Gastrocnemius medialis (tissue), 4 donors: ENCODE measurements at regions of chr6 and their contacts with region 1.

Region 1: GRCh38 chr6:47413752-47414422 is 63.7 kb upstream of the CD2AP start:
- DNase-seq: no peak
- ATAC-seq: peak; percentile 80 to 92
- H3K4me3 ChIP-seq: peak overlapping the region; percentile 36 to 57 (median 54)
- H3K27ac ChIP-seq: peak overlapping the region in 1 of 4 donors; percentile 52
- H3K4me1 ChIP-seq: peaks cover 0 to 5% of the 10 kb centered on the region in 2 donors
- H3K27me3 ChIP-seq: no peaks in the 10 kb centered on the region
- CTCF ChIP-seq: peak; percentile 60 to 91 (median 76)
- POLR2A ChIP-seq: no peak

Region 2: DNA sequence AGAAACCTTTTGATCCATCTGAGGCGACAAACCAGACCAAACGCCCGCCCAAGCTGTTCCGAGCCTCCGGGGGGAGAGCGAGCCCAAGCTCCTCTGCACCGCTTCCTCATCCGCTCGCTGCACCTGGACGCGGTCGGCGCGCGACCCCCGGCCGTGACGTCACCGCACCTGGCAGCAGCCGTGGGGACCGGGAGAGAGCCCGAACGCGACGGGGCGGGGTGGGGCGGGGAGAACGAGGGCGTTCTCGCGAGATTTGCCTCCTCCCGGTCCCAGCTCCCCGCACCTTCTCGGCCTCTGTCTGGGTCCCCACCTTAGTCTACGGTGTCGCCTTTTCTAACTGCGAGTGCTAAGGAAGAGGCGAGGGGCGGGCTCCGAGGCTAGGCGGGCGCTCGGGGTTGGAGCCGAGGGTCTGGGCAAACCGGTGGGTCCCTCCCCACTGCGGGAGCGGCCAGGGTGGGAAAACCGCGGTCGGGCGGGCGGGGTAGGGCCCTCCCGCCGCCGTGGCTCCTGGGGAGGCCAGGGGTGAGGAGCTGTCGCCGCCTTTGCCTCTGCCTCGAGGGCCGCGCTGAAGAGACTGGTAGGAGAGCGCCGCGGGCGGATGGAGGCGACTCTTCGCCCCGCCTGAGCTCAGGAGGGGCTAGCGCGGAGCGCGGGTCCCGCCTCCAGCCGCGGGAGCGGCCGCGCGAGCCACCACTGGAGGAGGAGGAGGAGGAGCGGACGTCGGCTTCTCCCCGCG is 63.8 kb after region 1 on chr6 and contains the start of gene CD2AP:
- in situ Hi-C with region 1: no loop called
- intact Hi-C with region 1: loop called (anchors 2 kb)
- DNase-seq: peak; percentile 74 to 75
- ATAC-seq: peak; percentile 93 to 94
- H3K4me3 ChIP-seq: peak within 1 kb of the TSS; percentile 77 to 93 (median 84)
- H3K27ac ChIP-seq: peak within 1 kb of the TSS; percentile 89 to 96 (median 94)
- H3K4me1 ChIP-seq: peaks cover 19 to 29% of the 10 kb centered on the region in 2 donors
- H3K27me3 ChIP-seq: no peaks in the 10 kb centered on the region
- CTCF ChIP-seq: peak in 1 of 5 experiments; percentile 33
- POLR2A ChIP-seq: peak; percentile 42 to 66
- total RNA-seq, gene CD2AP: 6.9 to 14.1 (median 8.6) TPM

Region 3: DNA sequence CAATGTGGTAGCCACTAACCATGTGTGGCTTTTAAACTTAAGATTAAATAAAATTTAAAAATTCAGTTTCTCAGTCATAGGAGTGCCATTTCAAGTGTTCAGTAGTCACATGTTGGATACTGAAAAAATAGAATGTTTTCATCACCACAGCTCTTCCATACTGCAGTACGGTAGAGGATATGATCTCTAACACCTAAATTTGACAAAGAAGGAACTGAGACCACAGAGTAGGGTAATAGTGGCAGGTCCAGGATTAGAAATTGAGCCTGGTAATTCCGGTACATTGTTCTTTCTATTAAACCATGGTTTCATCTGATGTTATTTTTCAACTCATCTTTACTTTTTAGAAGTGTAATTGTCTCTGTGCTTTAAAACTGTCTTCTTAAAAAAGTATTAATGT is 167.7 kb after region 1 on chr6:
- in situ Hi-C with region 1: loop called in 1 of 4 experiments (anchors 25 kb)
- intact Hi-C with region 1: no loop called
- DNase-seq: no peak
- ATAC-seq: no peak
- H3K4me3 ChIP-seq: no peak overlapping the region
- H3K27ac ChIP-seq: no peak overlapping the region
- H3K4me1 ChIP-seq: no peaks in the 10 kb centered on the region
- H3K27me3 ChIP-seq: no peaks in the 10 kb centered on the region
- CTCF ChIP-seq: no peak
- POLR2A ChIP-seq: no peak

Region 4: DNA sequence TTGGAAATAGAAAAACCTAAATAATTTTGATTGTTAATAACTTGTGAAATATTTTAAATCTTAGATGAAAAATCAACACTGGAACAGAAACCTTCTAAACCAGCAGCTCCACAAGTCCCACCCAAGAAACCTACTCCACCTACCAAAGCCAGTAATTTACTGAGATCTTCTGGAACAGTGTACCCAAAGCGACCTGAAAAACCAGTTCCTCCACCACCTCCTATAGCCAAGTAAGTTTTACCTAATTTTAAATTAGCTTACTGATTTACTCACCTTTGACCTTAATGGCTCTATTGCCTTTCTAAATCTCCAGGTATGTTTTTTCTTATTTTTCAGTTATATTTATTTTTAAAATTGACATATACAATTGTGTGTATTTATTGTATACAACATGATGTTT is 181.9 kb after region 1 on chr6:
- in situ Hi-C with region 1: loop called in 1 of 4 experiments (anchors 25 kb)
- intact Hi-C with region 1: loop called (anchors 10 kb)
- DNase-seq: no peak
- ATAC-seq: no peak
- H3K4me3 ChIP-seq: no peak overlapping the region
- H3K27ac ChIP-seq: no peak overlapping the region
- H3K4me1 ChIP-seq: no peaks in the 10 kb centered on the region
- H3K27me3 ChIP-seq: no peaks in the 10 kb centered on the region
- CTCF ChIP-seq: no peak
- POLR2A ChIP-seq: no peak

Region 5: GRCh38 chr6:47769982-47770381 is 356.1 kb after region 1 on chr6:
- in situ Hi-C with region 1: loop called (anchors 10 to 25 kb)
- intact Hi-C with region 1: no loop called
- DNase-seq: no peak
- ATAC-seq: no peak
- H3K4me3 ChIP-seq: no peak overlapping the region
- H3K27ac ChIP-seq: no peak overlapping the region
- H3K4me1 ChIP-seq: no peaks in the 10 kb centered on the region
- H3K27me3 ChIP-seq: no peaks in the 10 kb centered on the region
- CTCF ChIP-seq: no peak
- POLR2A ChIP-seq: no peak

Region 6: DNA sequence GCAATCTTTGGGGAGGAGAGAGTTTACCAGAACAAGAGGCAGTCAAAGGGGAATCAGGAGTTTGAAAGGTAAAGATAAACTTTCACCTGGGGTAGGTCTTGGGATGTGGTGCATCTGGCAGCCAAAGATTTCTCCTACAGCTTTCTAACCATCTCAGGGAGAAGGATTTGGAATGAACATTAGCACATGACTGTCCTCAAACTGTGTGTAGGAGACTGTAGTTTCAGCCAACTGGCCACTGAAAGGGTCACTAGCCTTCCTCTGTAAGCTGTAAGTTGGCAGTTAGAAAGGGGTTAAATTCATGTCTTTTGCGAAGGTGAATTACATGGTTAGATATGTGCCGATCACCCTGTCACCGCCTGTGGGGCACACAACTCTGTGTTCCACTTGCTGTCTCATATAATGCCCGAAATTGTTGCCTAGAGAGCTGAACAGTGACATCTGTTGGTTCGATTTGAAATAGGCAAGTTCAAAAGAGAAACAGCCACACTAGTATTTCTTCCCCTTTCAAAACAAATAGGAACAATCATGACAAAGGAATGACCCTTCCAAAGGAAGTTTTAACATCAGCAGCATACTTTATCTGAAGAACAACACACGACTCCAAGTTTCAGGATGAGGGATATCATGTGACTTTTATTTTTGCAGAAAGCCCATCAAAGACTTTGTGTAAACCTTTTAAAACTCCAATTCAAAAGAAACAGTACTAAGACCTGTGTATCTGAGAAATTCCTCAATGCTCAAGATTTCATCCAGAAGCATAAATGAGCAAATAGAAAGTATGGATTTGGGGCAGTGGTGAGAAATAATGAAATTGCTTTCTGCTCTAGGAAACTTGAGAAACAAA is 366.8 kb after region 1 on chr6:
- in situ Hi-C with region 1: loop called (anchors 10 to 25 kb)
- intact Hi-C with region 1: loop called (anchors 2 kb)
- DNase-seq: no peak
- ATAC-seq: peak; percentile 92 to 94
- H3K4me3 ChIP-seq: peak overlapping the region in 1 of 4 donors; percentile 30
- H3K27ac ChIP-seq: no peak overlapping the region
- H3K4me1 ChIP-seq: peaks cover 0 to 7% of the 10 kb centered on the region in 2 donors
- H3K27me3 ChIP-seq: no peaks in the 10 kb centered on the region
- CTCF ChIP-seq: peak; percentile 33 to 65 (median 53)
- POLR2A ChIP-seq: no peak

Region 7: GRCh38 chr6:47787620-47788497 is 374.0 kb after region 1 on chr6:
- in situ Hi-C with region 1: loop called in 2 of 4 experiments (anchors 25 kb)
- intact Hi-C with region 1: no loop called
- DNase-seq: peak in 1 of 2 donors; percentile 14
- ATAC-seq: peak; percentile 56 to 79
- H3K4me3 ChIP-seq: peak overlapping the region in 3 of 4 donors; percentile 10 to 23 (median 13)
- H3K27ac ChIP-seq: no peak overlapping the region
- H3K4me1 ChIP-seq: no peaks in the 10 kb centered on the region
- H3K27me3 ChIP-seq: no peaks in the 10 kb centered on the region
- CTCF ChIP-seq: peak; percentile 55 to 83 (median 69)
- POLR2A ChIP-seq: no peak

Region 8: GRCh38 chr6:48876687-48877086 is 1462.8 kb after region 1 on chr6:
- in situ Hi-C with region 1: no loop called
- intact Hi-C with region 1: no loop called
- DNase-seq: no peak
- ATAC-seq: no peak
- H3K4me3 ChIP-seq: no peak overlapping the region
- H3K27ac ChIP-seq: no peak overlapping the region
- H3K4me1 ChIP-seq: no peaks in the 10 kb centered on the region
- H3K27me3 ChIP-seq: no peaks in the 10 kb centered on the region
- CTCF ChIP-seq: no peak
- POLR2A ChIP-seq: no peak